Posterior vena cava (tissue), 2 donors: ENCODE measurements at regions of chr6 and their contacts with region 1.

Region 1: DNA sequence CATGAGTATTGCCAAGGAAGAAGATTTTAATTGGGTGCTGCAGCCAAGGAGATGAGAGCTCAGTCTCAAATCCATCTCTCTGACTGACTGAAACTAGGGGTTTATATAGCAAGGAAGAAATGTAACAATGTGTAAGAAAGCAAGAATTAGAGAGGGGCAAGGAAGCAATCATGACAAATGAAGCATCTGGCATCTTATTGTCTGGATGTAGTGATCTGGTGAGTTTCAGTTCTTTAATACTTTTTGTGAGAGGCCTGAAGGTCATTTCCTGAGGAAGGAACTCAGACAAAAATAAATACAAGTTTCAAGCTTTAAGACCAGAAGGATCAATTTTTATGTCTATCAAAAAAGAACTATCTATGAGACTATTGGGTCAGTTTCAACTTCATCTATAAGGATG is 64.2 kb downstream of the HTR1E start:
- DNase-seq: no peak

Region 2: GRCh38 chr6:88761237-88762031 is 1759.9 kb after region 1 on chr6:
- intact Hi-C with region 1: loop called in 1 of 2 experiments (anchors 5 kb)
- DNase-seq: no peak